ENCODE measurements at regions of chr2 and their contacts with region 1.

Region 1: GRCh38 chr2:68925295-68925896 is 27.3 kb downstream of the GKN2 start:
- DNase-seq: peak; percentile 75
- ATAC-seq: peak; percentile 87
- H3K4me3 Mint-ChIP-seq: no peak overlapping the region
- H3K27ac Mint-ChIP-seq: no peak overlapping the region
- H3K4me1 Mint-ChIP-seq: peaks cover 10% of the 10 kb centered on the region
- H3K27me3 Mint-ChIP-seq: peaks cover 3% of the 10 kb centered on the region

Region 2: DNA sequence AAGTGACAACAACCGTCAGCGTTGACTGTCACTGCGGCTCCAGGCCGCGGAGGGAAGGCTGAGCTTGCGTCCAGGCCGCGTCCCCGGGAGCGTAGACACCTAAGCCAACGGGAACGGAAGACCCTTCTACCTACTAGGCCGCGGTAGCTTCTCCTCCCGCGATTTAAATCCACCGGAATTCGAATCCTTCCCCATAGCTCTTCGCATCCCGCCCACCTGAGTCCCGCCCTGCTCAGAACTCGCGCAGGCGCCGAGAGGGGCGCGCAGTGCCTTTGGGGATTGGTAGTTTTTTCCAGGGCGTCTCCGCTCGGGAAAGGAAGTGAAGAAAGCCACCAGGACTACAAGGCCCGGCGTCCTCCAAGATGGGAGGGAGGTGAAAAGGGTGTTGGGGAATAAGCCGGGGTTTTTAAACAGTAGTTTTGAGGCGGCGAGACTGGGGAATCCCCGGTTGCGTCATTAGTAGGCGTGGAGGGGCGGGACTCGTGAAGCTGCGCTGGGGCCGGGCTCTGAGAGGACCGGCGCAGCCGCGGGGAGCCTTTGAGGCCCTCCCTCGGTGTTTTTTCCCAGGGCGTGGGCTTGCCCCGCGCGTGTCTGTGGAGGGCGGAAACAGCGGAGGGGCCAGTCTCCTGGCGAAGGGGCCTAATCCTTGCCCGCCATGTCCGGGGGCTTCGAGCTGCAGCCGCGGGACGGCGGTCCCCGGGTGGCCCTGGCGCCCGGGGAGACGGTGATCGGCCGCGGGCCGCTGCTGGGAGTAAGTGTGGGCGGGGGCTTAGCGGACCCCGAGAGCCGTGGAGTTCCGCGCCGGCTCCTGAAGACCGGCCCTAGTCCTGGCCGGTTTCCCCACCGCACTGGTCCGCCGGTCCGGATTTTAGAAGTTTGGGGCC is 458.1 kb before region 1 on chr2 and contains the starts of genes APLF and FBXO48:
- CTCF ChIA-PET with region 1: interaction called, 113 read pairs
- POLR2A ChIA-PET with region 1: interaction called, 6 read pairs
- DNase-seq: peak; percentile 99
- ATAC-seq: peak; percentile 94
- H3K4me3 Mint-ChIP-seq: peak within 1 kb of the TSS; percentile 98
- H3K27ac Mint-ChIP-seq: peak within 1 kb of the TSS; percentile 92
- H3K4me1 Mint-ChIP-seq: peaks cover 34% of the 10 kb centered on the region
- H3K27me3 Mint-ChIP-seq: peaks cover 2% of the 10 kb centered on the region
- total RNA-seq, gene APLF: 2.2 to 2.6 TPM
- total RNA-seq, gene FBXO48: 2.4 to 2.6 TPM

Region 3: DNA sequence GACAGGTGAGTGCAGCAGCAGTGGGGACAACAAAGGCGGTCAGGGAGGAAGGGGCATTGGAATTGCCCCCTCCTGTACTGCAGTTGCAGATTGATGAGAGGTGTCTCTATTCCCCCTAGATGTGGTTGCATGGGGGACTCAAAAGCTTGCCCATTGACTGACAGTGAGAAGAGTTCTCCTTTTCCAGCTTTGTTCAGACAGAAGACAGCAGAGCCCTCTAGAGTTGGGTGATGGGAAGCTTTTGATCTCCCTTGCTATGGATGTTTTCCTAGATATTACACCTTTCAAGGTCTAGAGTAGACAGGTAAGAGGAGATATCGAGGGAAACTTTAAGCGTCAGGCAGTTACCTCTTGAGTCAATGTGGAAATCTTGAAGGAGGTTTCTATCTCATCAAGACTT is 279.1 kb before region 1 on chr2:
- CTCF ChIA-PET with region 1: interaction called, 10 read pairs
- POLR2A ChIA-PET with region 1: no interaction called
- DNase-seq: no peak
- ATAC-seq: no peak
- H3K4me3 Mint-ChIP-seq: no peak overlapping the region
- H3K27ac Mint-ChIP-seq: no peak overlapping the region
- H3K4me1 Mint-ChIP-seq: peaks cover 20% of the 10 kb centered on the region
- H3K27me3 Mint-ChIP-seq: peaks cover 65% of the 10 kb centered on the region

Region 4: GRCh38 chr2:68721482-68722101 is 203.8 kb before region 1 on chr2:
- CTCF ChIA-PET with region 1: interaction called, 19 read pairs
- POLR2A ChIA-PET with region 1: no interaction called
- DNase-seq: peak; percentile 68
- ATAC-seq: peak; percentile 72
- H3K4me3 Mint-ChIP-seq: peak overlapping the region; percentile 46
- H3K27ac Mint-ChIP-seq: peak overlapping the region; percentile 91
- H3K4me1 Mint-ChIP-seq: peaks cover 98% of the 10 kb centered on the region
- H3K27me3 Mint-ChIP-seq: no peaks in the 10 kb centered on the region

Region 5: DNA sequence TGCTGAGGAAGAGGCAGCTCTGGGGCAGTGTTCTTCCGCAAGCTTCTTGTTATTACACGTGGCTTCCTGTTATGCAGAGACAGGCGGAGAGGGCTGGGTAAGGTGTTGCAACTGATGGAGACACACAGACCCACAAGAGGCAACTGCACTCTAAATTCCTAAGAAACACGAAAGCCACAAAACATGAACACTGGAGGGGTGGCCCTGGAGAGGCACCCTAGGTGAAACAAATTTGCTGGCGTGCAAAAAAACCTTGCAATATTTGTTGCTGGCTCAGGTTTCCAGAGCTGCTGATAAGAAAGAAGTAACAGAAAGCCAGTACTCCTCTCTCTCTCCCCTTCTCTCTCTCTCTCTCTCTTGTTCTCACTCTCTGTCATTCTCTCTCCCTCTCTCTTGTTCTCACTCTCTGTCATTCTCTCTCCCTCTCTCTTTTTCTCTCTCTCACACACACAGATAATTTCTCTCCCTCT is 159.0 kb before region 1 on chr2:
- CTCF ChIA-PET with region 1: interaction called, 12 read pairs
- POLR2A ChIA-PET with region 1: no interaction called
- DNase-seq: peak; percentile 82
- ATAC-seq: peak; percentile 79
- H3K4me3 Mint-ChIP-seq: peak overlapping the region; percentile 83
- H3K27ac Mint-ChIP-seq: peak overlapping the region; percentile 97
- H3K4me1 Mint-ChIP-seq: peaks cover 91% of the 10 kb centered on the region
- H3K27me3 Mint-ChIP-seq: no peaks in the 10 kb centered on the region

Region 6: DNA sequence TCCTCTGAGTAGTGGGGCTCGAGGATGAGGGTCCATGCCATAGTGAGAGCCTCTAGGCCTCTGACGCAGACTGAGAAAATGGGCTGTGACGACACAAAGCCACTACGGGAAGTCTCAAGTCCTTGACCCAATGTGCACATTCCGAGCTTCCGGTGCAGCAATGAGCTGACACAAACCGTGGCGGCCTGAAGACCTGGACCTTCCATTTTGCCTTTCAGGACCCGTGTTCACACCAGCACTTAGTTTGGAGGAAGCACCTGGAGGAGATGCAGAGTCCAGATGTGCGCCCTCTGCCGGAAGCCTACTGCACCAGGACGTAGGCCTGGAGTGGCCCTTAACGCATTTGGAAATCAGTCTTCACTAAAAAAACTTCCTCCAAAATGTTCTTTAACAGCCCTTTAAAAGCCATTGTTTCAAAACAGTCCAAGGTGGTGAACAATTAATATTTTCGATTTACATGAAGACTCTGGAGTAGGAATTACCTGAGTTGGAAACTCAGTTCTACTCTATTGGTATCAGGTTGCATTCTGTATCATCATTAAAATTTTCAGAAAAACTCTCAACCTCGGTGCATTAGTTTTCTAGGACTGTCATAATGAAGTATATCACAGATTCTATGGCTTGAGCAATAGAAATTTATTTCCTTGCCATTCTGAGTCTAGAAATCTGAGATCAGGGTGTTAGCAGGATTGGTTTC is 88.1 kb before region 1 on chr2:
- CTCF ChIA-PET with region 1: interaction called, 53 read pairs
- POLR2A ChIA-PET with region 1: no interaction called
- DNase-seq: peak; percentile 80
- ATAC-seq: peak; percentile 82
- H3K4me3 Mint-ChIP-seq: no peak overlapping the region
- H3K27ac Mint-ChIP-seq: no peak overlapping the region
- H3K4me1 Mint-ChIP-seq: peaks cover 44% of the 10 kb centered on the region
- H3K27me3 Mint-ChIP-seq: no peaks in the 10 kb centered on the region

Region 7: GRCh38 chr2:68943581-68944568 is 18.5 kb after region 1 on chr2:
- CTCF ChIA-PET with region 1: interaction called, 29 read pairs
- POLR2A ChIA-PET with region 1: no interaction called
- DNase-seq: peak; percentile 68
- ATAC-seq: peak; percentile 75
- H3K4me3 Mint-ChIP-seq: no peak overlapping the region
- H3K27ac Mint-ChIP-seq: no peak overlapping the region
- H3K4me1 Mint-ChIP-seq: peaks cover 2% of the 10 kb centered on the region
- H3K27me3 Mint-ChIP-seq: peaks cover 41% of the 10 kb centered on the region

Region 8: GRCh38 chr2:69138793-69139510 is 213.6 kb after region 1 on chr2:
- CTCF ChIA-PET with region 1: no interaction called
- POLR2A ChIA-PET with region 1: no interaction called
- DNase-seq: no peak
- ATAC-seq: no peak
- H3K4me3 Mint-ChIP-seq: no peak overlapping the region
- H3K27ac Mint-ChIP-seq: no peak overlapping the region
- H3K4me1 Mint-ChIP-seq: no peaks in the 10 kb centered on the region
- H3K27me3 Mint-ChIP-seq: peaks cover 15% of the 10 kb centered on the region

Measured in activated CD8-positive, alpha-beta T cell treated with anti-CD3 and anti-CD28 coated beads, Interleukin-2, amount 10 ng/mL, durations not matched to agents 7 days and 5 days (primary cell).